ENCODE measurements at regions of chr17 and their contacts with region 1.

Region 1: GRCh38 chr17:68247445-68248198 is at the start of gene AMZ2:
- DNase-seq: peak; percentile 100
- H3K4me3 Mint-ChIP-seq: peak within 1 kb of the TSS; percentile 86
- H3K27ac Mint-ChIP-seq: peak within 1 kb of the TSS; percentile 93
- H3K4me1 Mint-ChIP-seq: peaks cover 37% of the 10 kb centered on the region
- H3K27me3 Mint-ChIP-seq: no peaks in the 10 kb centered on the region
- total RNA-seq, gene AMZ2: 75.8 and 77.5 TPM in 2 replicates

Region 2: DNA sequence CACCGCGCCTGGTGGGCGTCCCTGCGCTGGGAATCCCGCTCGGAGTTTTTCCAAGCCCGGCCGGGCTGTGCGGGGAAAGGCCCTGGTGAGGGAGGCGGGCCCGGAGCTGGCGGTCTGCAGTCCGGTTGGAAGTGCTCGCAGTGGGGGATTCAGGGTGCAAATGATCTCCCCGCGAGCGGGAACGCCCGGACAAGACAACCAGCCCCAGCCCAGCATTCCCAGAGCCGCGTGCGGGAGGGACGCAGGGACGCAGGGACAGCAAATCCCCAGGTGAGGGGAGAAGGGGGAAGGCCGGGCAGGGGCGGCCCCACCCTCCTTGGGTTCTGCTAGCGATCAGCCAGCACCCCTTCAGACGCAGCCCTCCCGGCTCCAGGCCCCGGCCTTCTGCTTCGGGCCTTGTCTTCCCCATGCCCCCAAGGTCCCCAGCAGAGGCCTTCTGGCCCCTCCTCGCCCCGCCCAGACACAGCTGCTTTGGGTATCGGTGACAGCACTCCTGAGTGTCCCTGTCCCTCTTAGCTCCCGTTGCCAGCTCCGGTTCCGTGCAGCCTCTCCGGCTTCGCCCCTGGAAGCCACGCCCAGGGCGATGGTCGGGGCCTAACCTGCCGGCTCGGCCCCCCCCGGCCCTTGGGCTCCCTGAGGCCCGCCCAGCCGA is 50.6 kb before region 1 on chr17:
- intact Hi-C with region 1: no loop called
- DNase-seq: peak; percentile 78
- H3K4me3 Mint-ChIP-seq: peak overlapping the region; percentile 67
- H3K27ac Mint-ChIP-seq: no peak overlapping the region
- H3K4me1 Mint-ChIP-seq: peaks cover 21% of the 10 kb centered on the region
- H3K27me3 Mint-ChIP-seq: peaks cover 52% of the 10 kb centered on the region

Region 3: DNA sequence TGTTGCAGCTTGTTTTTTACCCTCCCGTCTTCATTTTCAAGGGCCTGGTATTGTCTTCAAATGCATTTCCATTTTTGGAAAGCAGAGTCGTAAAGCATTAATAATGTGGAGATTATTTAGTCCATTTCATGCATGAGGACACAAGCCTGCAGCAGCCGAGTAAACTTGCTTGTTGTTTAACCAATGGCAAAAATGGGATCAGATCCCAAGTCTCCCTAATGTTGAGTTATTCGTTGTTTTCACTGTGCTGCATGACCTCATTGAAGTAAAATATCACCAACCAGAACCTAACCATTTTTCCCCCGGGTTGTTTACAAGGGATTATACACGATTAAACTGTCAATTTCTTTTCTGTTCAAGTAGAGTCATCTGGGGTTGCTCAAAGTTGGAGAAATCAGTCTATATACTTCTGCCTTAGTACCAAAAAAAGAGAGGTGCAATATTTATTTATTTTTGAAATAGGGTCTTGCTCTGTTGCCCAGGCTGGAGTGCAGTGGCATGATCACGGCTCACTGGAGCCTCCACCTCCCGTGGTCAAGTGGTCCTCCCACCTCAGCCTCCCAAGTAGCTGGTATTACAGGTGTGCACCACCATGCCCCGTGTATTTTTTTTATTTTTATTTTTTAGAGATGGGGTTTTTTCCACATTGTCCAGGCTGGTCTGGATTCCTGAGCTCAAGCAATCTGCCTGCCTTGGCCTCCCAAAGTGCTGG is 12.6 kb after region 1 on chr17:
- intact Hi-C with region 1: loop called (anchors 1 kb)
- DNase-seq: no peak
- H3K4me3 Mint-ChIP-seq: peak overlapping the region; percentile 79
- H3K27ac Mint-ChIP-seq: peak overlapping the region; percentile 86
- H3K4me1 Mint-ChIP-seq: peaks cover 56% of the 10 kb centered on the region
- H3K27me3 Mint-ChIP-seq: no peaks in the 10 kb centered on the region

Region 4: DNA sequence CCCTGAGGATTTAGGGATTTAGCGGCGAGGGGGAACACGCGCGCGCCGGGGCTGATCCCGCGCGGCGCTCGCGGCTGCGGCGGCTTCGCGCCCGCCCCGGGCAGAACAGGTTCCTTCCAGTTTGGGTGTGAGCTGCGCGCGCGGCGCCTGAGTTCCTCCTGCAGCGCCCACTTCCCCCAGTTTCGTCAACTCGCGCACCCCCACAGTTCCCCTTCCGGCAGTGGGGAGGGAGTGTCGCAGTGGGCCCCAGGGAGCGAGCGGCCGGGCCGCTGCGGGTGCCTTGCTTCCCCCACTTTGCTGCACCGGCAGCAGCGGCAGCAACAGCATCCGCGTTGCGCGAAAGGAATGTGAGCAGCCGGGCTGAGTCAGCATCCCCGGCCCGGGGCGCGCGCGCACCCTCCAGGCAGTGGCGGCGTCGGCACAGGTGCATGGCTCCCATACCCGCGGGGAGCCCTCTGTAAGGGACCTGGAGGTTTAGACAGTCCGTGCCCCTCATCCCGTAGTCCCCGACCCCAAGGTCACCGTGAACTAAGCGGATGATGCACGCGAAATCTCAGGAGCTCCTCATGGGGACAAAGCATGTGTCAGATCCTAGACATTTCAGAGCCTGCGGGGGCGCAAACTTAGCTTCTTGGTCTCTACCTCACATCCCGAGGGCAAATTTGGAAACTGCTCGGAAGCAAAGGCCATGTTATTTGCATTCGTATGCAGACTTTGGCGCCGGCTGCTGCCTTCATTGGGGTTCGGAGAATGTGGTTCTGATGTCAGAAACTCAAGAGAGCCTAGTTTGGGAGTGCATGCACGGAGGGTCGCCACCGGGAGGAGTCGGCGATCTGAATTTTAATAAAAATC is 44.4 kb after region 1 on chr17:
- intact Hi-C with region 1: no loop called
- DNase-seq: peak; percentile 97
- H3K4me3 Mint-ChIP-seq: peak overlapping the region; percentile 98
- H3K27ac Mint-ChIP-seq: peak overlapping the region; percentile 92
- H3K4me1 Mint-ChIP-seq: peaks cover 55% of the 10 kb centered on the region
- H3K27me3 Mint-ChIP-seq: peaks cover 2% of the 10 kb centered on the region

Region 5: GRCh38 chr17:68512247-68512982 is 264.8 kb after region 1 on chr17 and contains the start of gene PRKAR1A:
- intact Hi-C with region 1: loop called (anchors 5 kb)
- DNase-seq: peak; percentile 98
- H3K4me3 Mint-ChIP-seq: peak within 1 kb of the TSS; percentile 99
- H3K27ac Mint-ChIP-seq: peak within 1 kb of the TSS; percentile 99
- H3K4me1 Mint-ChIP-seq: peaks cover 61% of the 10 kb centered on the region
- H3K27me3 Mint-ChIP-seq: no peaks in the 10 kb centered on the region
- total RNA-seq, gene PRKAR1A: 194 and 207 TPM in 2 replicates